Activated CD8-positive, alpha-beta T cell treated with anti-CD3 and anti-CD28 coated beads for 36 hours (primary cell): ENCODE measurements at regions of chr1 and their contacts with region 1.

Region 1: GRCh38 chr1:66242646-66243547 is 291.1 kb upstream of the SGIP1 start:
- DNase-seq: peak; percentile 84
- ATAC-seq: peak; percentile 61
- H3K4me3 Mint-ChIP-seq: no peak overlapping the region
- H3K27ac Mint-ChIP-seq: no peak overlapping the region
- H3K4me1 Mint-ChIP-seq: peaks cover 21% of the 10 kb centered on the region
- H3K27me3 Mint-ChIP-seq: peaks cover 6% of the 10 kb centered on the region
- CTCF ChIP-seq: peak; percentile 99

Region 2: GRCh38 chr1:65703853-65704252 is 539.0 kb before region 1 on chr1:
- CTCF ChIA-PET with region 1: interaction called, 11 read pairs
- POLR2A ChIA-PET with region 1: no interaction called
- intact Hi-C with region 1: no loop called
- DNase-seq: no peak
- ATAC-seq: no peak
- H3K4me3 Mint-ChIP-seq: no peak overlapping the region
- H3K27ac Mint-ChIP-seq: no peak overlapping the region
- H3K4me1 Mint-ChIP-seq: no peaks in the 10 kb centered on the region
- H3K27me3 Mint-ChIP-seq: peaks cover 24% of the 10 kb centered on the region
- CTCF ChIP-seq: no peak

Region 3: DNA sequence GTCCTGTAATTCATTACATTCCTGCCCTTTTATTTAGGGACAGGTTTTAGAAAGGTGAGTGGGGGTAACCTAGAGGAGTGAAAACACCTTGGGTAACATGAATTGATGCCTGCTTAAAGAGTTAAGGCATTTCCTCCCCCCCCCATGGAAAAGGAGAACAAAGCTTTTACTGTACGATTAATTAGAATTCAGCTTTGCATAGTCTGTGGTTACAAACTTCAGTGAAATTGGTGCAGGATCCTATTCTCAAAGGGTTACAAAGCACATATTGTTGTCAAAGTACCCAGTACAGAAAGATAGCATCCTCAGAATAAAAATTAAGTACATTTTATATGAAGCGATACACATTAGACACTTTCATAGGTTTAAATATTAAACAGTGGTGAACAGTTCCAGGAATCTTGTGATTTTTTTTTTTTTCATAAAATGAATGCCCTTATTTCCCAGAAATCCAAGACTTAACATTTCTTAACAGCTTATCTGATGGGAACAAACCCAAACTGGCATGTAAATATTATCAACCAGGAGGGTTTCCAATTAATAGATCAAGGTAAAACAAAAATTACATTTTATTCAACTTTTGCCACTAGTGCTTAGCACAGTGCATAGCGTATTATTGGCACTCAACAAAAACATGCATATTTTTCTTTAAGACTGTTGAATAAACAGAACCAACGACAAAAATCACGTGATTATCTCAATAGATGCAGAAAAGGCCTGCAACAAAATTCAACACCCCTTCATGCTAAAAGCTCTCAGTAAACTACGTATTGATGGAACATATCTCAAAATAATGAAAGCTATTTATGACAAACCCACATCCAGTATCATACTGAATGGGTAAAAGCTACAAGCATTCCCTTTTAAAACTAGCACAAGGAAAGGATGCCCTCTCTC is 277.5 kb before region 1 on chr1:
- CTCF ChIA-PET with region 1: interaction called, 239 read pairs
- POLR2A ChIA-PET with region 1: no interaction called
- intact Hi-C with region 1: no loop called
- DNase-seq: no peak
- ATAC-seq: no peak
- H3K4me3 Mint-ChIP-seq: no peak overlapping the region
- H3K27ac Mint-ChIP-seq: no peak overlapping the region
- H3K4me1 Mint-ChIP-seq: no peaks in the 10 kb centered on the region
- H3K27me3 Mint-ChIP-seq: peaks cover 2% of the 10 kb centered on the region
- CTCF ChIP-seq: no peak

Region 4: GRCh38 chr1:66182551-66183178 is 60.2 kb before region 1 on chr1:
- CTCF ChIA-PET with region 1: interaction called, 39 read pairs
- POLR2A ChIA-PET with region 1: interaction called, 3 read pairs
- intact Hi-C with region 1: no loop called
- DNase-seq: peak; percentile 70
- ATAC-seq: peak; percentile 98
- H3K4me3 Mint-ChIP-seq: no peak overlapping the region
- H3K27ac Mint-ChIP-seq: peak overlapping the region; percentile 39
- H3K4me1 Mint-ChIP-seq: peaks cover 21% of the 10 kb centered on the region
- H3K27me3 Mint-ChIP-seq: no peaks in the 10 kb centered on the region
- CTCF ChIP-seq: no peak

Region 5: DNA sequence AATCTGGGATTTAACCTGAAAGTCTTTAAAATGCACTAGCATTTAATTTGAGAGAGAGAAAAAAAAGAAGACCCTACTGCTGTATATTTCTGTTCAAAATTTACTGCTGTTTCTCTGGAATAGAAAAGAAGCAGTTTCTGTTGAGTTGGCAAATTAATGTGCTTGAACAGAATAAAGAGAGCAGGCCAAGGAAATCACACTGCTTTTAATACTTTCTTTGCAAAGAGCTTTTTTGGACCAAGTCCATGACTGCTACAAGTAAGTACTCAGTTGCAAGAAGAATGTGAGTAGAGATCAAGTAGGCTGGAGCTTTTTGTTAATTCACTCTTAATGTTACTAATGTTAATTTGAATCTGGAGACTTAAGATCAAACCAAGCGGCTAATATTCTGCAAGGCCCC is 45.1 kb before region 1 on chr1:
- CTCF ChIA-PET with region 1: no interaction called
- POLR2A ChIA-PET with region 1: no interaction called
- intact Hi-C with region 1: no loop called
- DNase-seq: no peak
- ATAC-seq: no peak
- H3K4me3 Mint-ChIP-seq: no peak overlapping the region
- H3K27ac Mint-ChIP-seq: no peak overlapping the region
- H3K4me1 Mint-ChIP-seq: no peaks in the 10 kb centered on the region
- H3K27me3 Mint-ChIP-seq: no peaks in the 10 kb centered on the region
- CTCF ChIP-seq: no peak

Region 6: DNA sequence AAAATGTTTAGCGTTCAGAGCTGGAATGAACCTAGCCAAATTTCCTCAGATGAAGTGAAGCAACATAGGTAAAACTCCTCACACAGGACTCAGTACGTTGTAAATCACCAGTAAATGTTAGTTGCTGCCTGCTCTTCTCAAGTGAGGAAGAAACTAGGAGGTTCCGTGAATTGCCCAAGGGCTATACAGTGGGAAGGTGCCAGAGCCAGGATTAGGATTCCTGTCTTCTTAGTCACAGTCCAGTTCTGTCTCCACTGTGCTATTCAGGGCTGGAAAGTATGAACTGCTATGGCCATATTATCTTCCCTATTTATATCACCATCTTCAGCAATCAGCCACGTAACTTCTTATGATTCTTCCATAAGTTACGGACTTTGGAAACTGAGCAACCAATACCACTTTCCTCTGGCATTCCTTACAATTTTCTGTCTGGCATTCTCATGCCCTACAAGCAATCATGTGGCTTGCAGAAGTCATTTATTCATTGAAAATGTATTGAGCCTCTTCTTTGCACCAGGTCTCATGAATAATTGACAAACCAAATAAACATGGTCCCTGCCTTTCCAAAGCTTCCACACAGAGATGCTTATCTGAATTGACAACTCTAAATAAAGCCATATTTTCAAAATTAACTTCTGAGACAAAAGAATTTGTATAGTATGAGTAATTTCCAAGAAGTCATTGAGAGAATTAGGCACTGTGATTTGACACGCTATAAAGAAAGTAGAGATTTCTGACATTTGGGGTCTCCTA is 19.5 kb after region 1 on chr1:
- CTCF ChIA-PET with region 1: interaction called, 25 read pairs
- POLR2A ChIA-PET with region 1: interaction called, 5 read pairs
- intact Hi-C with region 1: no loop called
- DNase-seq: no peak
- ATAC-seq: no peak
- H3K4me3 Mint-ChIP-seq: no peak overlapping the region
- H3K27ac Mint-ChIP-seq: no peak overlapping the region
- H3K4me1 Mint-ChIP-seq: peaks cover 69% of the 10 kb centered on the region
- H3K27me3 Mint-ChIP-seq: no peaks in the 10 kb centered on the region
- CTCF ChIP-seq: no peak

Region 7: GRCh38 chr1:66360285-66360724 is 117.4 kb after region 1 on chr1:
- CTCF ChIA-PET with region 1: interaction called, 16 read pairs
- POLR2A ChIA-PET with region 1: interaction called, 3 read pairs
- intact Hi-C with region 1: no loop called
- DNase-seq: peak; percentile 22
- ATAC-seq: peak; percentile 41
- H3K4me3 Mint-ChIP-seq: no peak overlapping the region
- H3K27ac Mint-ChIP-seq: no peak overlapping the region
- H3K4me1 Mint-ChIP-seq: peaks cover 88% of the 10 kb centered on the region
- H3K27me3 Mint-ChIP-seq: no peaks in the 10 kb centered on the region
- CTCF ChIP-seq: peak; percentile 79

Region 8: GRCh38 chr1:66589326-66589725 is 346.4 kb after region 1 on chr1:
- CTCF ChIA-PET with region 1: no interaction called
- POLR2A ChIA-PET with region 1: no interaction called
- intact Hi-C with region 1: no loop called
- DNase-seq: no peak
- ATAC-seq: no peak
- H3K4me3 Mint-ChIP-seq: no peak overlapping the region
- H3K27ac Mint-ChIP-seq: no peak overlapping the region
- H3K4me1 Mint-ChIP-seq: no peaks in the 10 kb centered on the region
- H3K27me3 Mint-ChIP-seq: peaks cover 4% of the 10 kb centered on the region
- CTCF ChIP-seq: no peak

Region 9: DNA sequence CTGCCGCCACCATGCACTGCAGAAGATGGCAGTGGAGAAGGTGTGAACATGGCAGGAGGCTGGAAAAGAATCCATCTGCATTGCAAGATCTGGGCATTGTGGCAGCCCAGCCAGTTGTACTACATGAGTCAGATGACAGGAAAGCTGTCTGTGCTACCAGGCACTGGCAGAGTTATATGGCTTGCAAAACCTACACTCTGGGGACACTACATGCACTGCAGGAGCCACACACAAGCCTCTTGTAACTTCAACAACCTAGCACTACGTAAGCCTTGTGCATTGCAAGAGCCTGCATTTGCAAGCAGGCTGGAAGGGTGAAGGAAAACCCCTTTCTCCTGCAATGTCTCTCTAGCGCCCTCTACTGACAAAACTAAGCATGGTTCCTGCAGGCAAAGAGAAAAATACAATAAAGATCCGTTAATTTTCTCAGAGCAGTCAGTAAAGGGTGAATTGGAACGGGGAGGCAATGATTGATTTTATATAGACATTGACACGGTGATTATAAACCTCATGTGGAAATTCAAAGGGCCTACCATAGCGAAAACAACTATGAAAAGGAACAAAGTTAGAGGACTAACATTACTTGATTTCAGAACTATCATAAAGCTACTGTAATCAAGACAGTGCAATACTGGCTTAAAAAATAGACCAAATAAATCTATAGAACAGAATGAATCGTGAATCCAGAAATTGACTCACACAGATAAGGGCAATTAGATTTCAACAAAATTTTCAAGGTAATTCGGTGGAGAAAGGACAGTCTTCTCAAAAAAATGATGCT is 483.2 kb after region 1 on chr1:
- CTCF ChIA-PET with region 1: no interaction called
- POLR2A ChIA-PET with region 1: no interaction called
- intact Hi-C with region 1: loop called (anchors 10 kb)
- DNase-seq: peak; percentile 66
- ATAC-seq: peak; percentile 87
- H3K4me3 Mint-ChIP-seq: no peak overlapping the region
- H3K27ac Mint-ChIP-seq: no peak overlapping the region
- H3K4me1 Mint-ChIP-seq: peaks cover 13% of the 10 kb centered on the region
- H3K27me3 Mint-ChIP-seq: peaks cover 19% of the 10 kb centered on the region
- CTCF ChIP-seq: peak; percentile 87